B cell (primary cell): ENCODE measurements at regions of chr15 and their contacts with region 1.

Region 1: GRCh38 chr15:79380755-79381497 is 51.2 kb upstream of the MINAR1 start:
- DNase-seq: peak; percentile 78
- ATAC-seq: peak; percentile 70
- H3K4me3 ChIP-seq: no peak overlapping the region
- H3K4me3 Mint-ChIP-seq: no peak overlapping the region
- H3K27ac ChIP-seq: no peak overlapping the region
- H3K27ac Mint-ChIP-seq: no peak overlapping the region
- H3K4me1 ChIP-seq: peaks cover 0 to 4% of the 10 kb centered on the region in 2 donors
- H3K4me1 Mint-ChIP-seq: no peaks in the 10 kb centered on the region
- H3K27me3 ChIP-seq: no peaks in the 10 kb centered on the region
- H3K27me3 Mint-ChIP-seq: no peaks in the 10 kb centered on the region
- CTCF ChIP-seq: peak; percentile 97

Region 2: DNA sequence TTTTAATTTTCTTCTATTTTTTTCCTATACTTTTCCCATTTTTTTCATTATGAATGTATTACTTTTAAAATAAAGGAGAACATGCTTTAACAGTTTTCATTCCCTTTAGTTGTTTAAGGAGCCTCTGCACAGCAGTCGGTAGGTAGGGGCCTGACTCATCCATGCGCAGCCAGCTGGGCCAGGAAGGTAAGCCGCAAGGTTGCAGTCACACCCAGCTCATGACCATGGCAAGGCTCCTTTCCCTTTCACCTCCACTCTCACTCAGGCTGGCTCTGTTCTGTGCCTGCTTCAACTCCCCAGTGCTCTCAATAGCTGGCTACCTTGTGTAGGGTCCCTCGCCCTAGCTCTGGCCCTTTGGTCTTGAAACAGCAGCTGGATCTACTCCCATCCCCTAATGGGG is 115.8 kb before region 1 on chr15:
- CTCF ChIA-PET with region 1: no interaction called
- POLR2A ChIA-PET with region 1: no interaction called
- intact Hi-C with region 1: no loop called
- DNase-seq: no peak
- ATAC-seq: no peak
- H3K4me3 ChIP-seq: no peak overlapping the region
- H3K4me3 Mint-ChIP-seq: no peak overlapping the region
- H3K27ac ChIP-seq: no peak overlapping the region
- H3K27ac Mint-ChIP-seq: no peak overlapping the region
- H3K4me1 ChIP-seq: no peaks in the 10 kb centered on the region
- H3K4me1 Mint-ChIP-seq: no peaks in the 10 kb centered on the region
- H3K27me3 ChIP-seq: peaks cover 0 to 7% (median 4%) of the 10 kb centered on the region in 4 experiments
- H3K27me3 Mint-ChIP-seq: peaks cover 35% of the 10 kb centered on the region
- CTCF ChIP-seq: no peak

Region 3: DNA sequence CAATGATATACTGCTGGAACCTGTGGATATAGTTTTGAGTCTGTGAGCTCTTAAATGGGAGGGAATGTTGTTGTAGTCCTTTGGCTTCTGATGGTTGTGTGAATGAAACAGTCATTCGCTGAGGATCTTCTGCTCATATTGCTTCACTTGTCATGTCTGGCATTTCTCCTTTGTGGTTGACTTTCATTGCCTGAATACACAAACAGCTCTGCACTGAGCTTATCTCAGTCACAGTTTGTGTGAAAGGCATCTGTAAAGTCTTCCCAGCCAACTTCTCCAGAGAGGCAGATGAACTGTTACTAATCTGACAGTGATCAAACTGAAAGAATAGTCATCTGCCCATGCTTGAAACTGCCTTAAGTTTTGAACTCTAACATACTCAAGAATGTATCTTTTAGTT is 10.2 kb before region 1 on chr15:
- CTCF ChIA-PET with region 1: interaction called, 47 read pairs
- POLR2A ChIA-PET with region 1: no interaction called
- intact Hi-C with region 1: no loop called
- DNase-seq: no peak
- ATAC-seq: no peak
- H3K4me3 ChIP-seq: no peak overlapping the region
- H3K4me3 Mint-ChIP-seq: no peak overlapping the region
- H3K27ac ChIP-seq: no peak overlapping the region
- H3K27ac Mint-ChIP-seq: no peak overlapping the region
- H3K4me1 ChIP-seq: no peaks in the 10 kb centered on the region
- H3K4me1 Mint-ChIP-seq: no peaks in the 10 kb centered on the region
- H3K27me3 ChIP-seq: no peaks in the 10 kb centered on the region
- H3K27me3 Mint-ChIP-seq: no peaks in the 10 kb centered on the region
- CTCF ChIP-seq: no peak

Region 4: GRCh38 chr15:79596051-79596507 is 215.2 kb after region 1 on chr15:
- CTCF ChIA-PET with region 1: interaction called, 12 read pairs
- POLR2A ChIA-PET with region 1: no interaction called
- intact Hi-C with region 1: no loop called
- DNase-seq: peak; percentile 65
- ATAC-seq: peak; percentile 58
- H3K4me3 ChIP-seq: no peak overlapping the region
- H3K4me3 Mint-ChIP-seq: no peak overlapping the region
- H3K27ac ChIP-seq: no peak overlapping the region
- H3K27ac Mint-ChIP-seq: no peak overlapping the region
- H3K4me1 ChIP-seq: no peaks in the 10 kb centered on the region
- H3K4me1 Mint-ChIP-seq: no peaks in the 10 kb centered on the region
- H3K27me3 ChIP-seq: peaks cover 0 to 9% (median 0%) of the 10 kb centered on the region in 4 experiments
- H3K27me3 Mint-ChIP-seq: peaks cover 35% of the 10 kb centered on the region
- CTCF ChIP-seq: peak; percentile 34

Region 5: GRCh38 chr15:79989682-79990081 is 608.8 kb after region 1 on chr15:
- CTCF ChIA-PET with region 1: interaction called, 25 read pairs
- POLR2A ChIA-PET with region 1: no interaction called
- intact Hi-C with region 1: no loop called
- DNase-seq: no peak
- ATAC-seq: no peak
- H3K4me3 ChIP-seq: no peak overlapping the region
- H3K4me3 Mint-ChIP-seq: no peak overlapping the region
- H3K27ac ChIP-seq: no peak overlapping the region
- H3K27ac Mint-ChIP-seq: no peak overlapping the region
- H3K4me1 ChIP-seq: peaks cover 0 to 5% of the 10 kb centered on the region in 2 donors
- H3K4me1 Mint-ChIP-seq: peaks cover 19% of the 10 kb centered on the region
- H3K27me3 ChIP-seq: peaks cover 0 to 12% (median 1%) of the 10 kb centered on the region in 4 experiments
- H3K27me3 Mint-ChIP-seq: peaks cover 5% of the 10 kb centered on the region
- CTCF ChIP-seq: no peak

Region 6: GRCh38 chr15:80234883-80235282 is 854.0 kb after region 1 on chr15:
- CTCF ChIA-PET with region 1: interaction called, 13 read pairs
- POLR2A ChIA-PET with region 1: no interaction called
- intact Hi-C with region 1: loop called (anchors 1 kb)
- DNase-seq: peak; percentile 36
- ATAC-seq: no peak
- H3K4me3 ChIP-seq: no peak overlapping the region
- H3K4me3 Mint-ChIP-seq: no peak overlapping the region
- H3K27ac ChIP-seq: no peak overlapping the region
- H3K27ac Mint-ChIP-seq: no peak overlapping the region
- H3K4me1 ChIP-seq: no peaks in the 10 kb centered on the region
- H3K4me1 Mint-ChIP-seq: no peaks in the 10 kb centered on the region
- H3K27me3 ChIP-seq: peaks cover 0 to 13% (median 5%) of the 10 kb centered on the region in 4 experiments
- H3K27me3 Mint-ChIP-seq: peaks cover 33% of the 10 kb centered on the region
- CTCF ChIP-seq: peak; percentile 47